ENCODE measurements at regions of chr4 and their contacts with region 1.

Region 1: DNA sequence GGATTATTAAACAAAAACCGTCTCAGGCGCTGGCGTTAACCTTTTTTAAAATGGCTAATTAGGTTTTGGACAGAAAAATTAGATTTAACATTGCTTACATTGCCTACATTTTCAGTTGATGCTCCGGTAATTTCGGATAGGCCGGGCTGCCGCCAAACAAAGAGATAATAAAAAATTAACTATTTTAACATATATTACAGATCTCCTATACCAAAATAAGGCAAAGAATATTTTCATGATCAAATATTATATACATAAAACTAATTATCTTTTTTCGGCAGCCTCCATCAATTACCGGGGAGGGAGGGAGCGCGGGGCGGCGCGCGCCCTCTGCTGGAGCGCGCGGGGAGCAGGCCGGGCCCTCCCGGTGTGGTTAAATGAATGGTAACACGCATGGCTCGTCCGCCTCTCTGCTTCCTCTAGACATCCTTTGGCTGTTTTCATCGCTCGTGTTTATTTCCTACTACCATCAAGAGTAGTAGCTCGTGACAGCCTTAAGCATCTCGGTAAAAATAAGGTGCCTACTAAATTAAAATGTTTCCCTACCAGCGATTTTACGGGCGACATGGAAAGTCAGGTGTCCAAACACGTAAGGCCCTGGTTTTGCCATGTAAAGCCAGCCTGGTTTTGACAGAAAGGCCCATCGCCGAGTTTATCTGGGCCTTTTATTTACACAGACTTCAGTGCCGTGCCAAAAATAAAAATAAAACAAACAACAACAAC is 52.4 kb upstream of the TMEM33 start:
- DNase-seq: no peak
- H3K4me3 ChIP-seq: no peak overlapping the region
- H3K27me3 ChIP-seq: peaks cover 43% of the 10 kb centered on the region
- CTCF ChIP-seq: peak; percentile 93

Region 2: GRCh38 chr4:41839916-41840854 is 42.6 kb before region 1 on chr4:
- CTCF ChIA-PET with region 1: no interaction called
- POLR2A ChIA-PET with region 1: no interaction called
- DNase-seq: no peak
- H3K4me3 ChIP-seq: no peak overlapping the region
- H3K27me3 ChIP-seq: no peaks in the 10 kb centered on the region
- CTCF ChIP-seq: no peak

Region 3: DNA sequence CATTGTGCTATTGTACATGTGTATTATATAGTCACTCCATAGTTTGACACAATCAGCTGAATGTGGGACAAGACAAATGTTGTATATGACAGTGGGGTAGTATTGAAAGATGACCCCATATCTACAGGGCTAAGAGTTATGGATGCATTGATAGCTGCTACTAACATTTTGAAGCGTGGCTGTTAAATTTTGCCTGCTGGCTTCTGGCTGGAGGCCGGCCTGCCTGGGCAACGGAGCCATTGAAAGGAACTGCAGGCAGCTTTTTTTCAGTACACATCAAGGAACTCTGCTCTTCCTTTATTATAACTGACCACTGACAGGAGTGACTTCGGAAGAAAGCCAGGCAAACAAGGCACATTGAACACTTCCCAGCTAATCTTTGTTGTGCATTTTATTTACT is 23.7 kb before region 1 on chr4:
- CTCF ChIA-PET with region 1: interaction called, 10 read pairs
- POLR2A ChIA-PET with region 1: no interaction called
- DNase-seq: no peak
- H3K4me3 ChIP-seq: no peak overlapping the region
- H3K27me3 ChIP-seq: peaks cover 15% of the 10 kb centered on the region
- CTCF ChIP-seq: no peak

Measured in BJ (cell line).